Posterior cingulate gyrus (tissue), 11 donors: ENCODE measurements at regions of chr9 and their contacts with region 1.

Region 1: DNA sequence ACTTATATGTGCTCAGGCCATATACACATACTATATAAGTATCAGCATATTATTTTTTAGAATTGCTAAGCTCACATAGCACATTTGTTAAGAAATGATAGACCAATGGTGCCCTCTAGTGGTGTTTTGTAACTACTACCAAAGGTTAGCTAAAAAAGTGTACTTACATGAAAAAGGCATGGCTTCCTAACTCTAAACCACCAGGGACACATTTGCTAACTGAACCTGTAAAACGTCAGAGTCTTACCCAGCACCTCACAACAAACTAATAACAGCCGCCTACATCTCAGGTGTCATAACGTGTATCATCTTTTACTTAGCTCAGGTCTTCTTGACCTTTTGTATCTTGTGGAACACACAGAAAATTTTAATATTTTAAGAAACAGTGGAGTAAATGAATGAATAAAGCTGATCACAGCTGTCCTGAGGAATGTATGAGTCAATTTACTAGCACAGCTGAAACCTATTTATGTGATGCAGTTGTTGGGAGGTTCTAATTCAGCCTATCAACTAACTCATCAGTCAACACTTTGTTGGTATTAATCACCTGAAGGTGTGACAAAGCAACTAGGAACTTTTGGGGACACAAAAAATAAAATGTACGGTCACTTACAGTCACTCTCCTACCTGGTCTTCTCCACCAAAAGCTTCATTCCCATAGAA is 72.9 kb downstream of the BAAT start:
- DNase-seq: no peak

Region 2: DNA sequence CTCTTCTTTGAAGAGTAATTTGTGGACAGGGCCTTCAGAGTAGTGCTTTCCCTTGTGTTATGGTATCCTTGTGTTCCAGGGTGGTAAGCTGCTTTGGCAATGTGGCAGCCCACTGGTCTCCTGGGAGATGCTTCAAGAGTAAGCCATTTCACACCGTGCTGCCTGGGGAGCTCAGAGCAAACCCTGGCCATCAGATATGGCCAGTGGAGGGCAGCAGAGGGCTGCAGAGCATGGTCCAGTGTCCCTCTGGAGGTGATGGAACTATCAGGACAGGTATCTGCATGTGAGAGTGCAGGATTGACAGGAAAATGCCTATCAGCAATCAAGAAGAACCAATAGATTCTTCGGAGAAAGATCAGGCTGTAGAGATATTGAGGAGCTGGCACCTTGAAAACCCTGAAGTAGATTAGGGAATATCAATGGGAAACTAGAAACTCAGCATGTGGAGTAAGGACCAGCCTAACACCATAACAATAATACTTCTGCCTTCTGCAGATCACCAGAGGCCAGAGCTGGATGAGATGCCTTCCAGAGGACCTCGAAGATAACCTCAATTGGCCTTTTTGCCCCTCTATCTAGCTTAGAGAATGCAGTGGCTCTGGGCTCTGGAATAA is 192.6 kb before region 1 on chr9:
- intact Hi-C with region 1: loop called (anchors 1 kb)
- DNase-seq: peak; percentile 36 to 96 (median 74)